ENCODE measurements at regions of chr3 and their contacts with region 1.

Region 1: GRCh38 chr3:187679638-187680396 is 9.6 kb upstream of the SST start:
- DNase-seq: no peak
- H3K4me3 ChIP-seq: no peak overlapping the region
- H3K27ac ChIP-seq: no peak overlapping the region
- H3K4me1 ChIP-seq: peaks cover 0 to 5% (median 0%) of the 10 kb centered on the region in 3 donors
- H3K27me3 ChIP-seq: peaks cover 0 to 50% (median 0%) of the 10 kb centered on the region in 4 donors
- CTCF ChIP-seq: peak; percentile 85 to 93 (median 90)
- POLR2A ChIP-seq: no peak

Region 2: GRCh38 chr3:187223799-187224198 is 456.0 kb before region 1 on chr3:
- intact Hi-C with region 1: loop called (anchors 5 kb)
- DNase-seq: no peak
- H3K4me3 ChIP-seq: no peak overlapping the region
- H3K27ac ChIP-seq: no peak overlapping the region
- H3K4me1 ChIP-seq: no peaks in the 10 kb centered on the region
- H3K27me3 ChIP-seq: peaks cover 0 to 5% (median 0%) of the 10 kb centered on the region in 4 donors
- CTCF ChIP-seq: no peak
- POLR2A ChIP-seq: no peak

Region 3: DNA sequence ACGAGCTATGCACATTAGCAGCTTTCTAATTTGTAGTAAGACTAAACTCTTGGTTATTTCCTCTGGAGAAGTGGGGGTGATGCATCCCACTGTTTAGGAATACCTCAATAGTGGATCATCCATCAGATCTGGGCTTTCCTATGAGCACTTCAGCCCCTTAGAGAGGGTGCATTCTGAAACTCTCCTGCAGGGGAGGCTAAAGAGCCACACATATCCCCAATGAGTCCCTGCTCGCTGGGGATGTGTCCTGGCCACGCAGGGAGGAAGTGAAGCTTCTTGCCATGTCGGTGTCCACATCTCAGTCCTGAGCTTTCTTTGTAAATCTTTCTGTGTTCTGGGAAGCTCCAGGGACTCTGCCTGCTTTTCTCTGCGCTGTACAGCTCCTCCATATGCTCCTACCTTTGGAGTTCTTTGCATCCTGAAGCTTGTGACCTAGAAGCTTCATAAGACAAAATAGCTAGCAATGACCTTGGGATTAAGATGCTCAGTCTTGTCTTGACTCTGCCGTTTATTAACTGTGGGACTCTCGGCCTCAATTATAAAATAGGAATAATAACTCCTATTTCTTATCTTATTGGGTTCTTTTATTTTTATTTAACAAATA is 360.0 kb before region 1 on chr3:
- intact Hi-C with region 1: loop called (anchors 5 kb)
- DNase-seq: no peak
- H3K4me3 ChIP-seq: no peak overlapping the region
- H3K27ac ChIP-seq: no peak overlapping the region
- H3K4me1 ChIP-seq: peaks cover 0 to 13% (median 2%) of the 10 kb centered on the region in 3 donors
- H3K27me3 ChIP-seq: peaks cover 0 to 73% (median 0%) of the 10 kb centered on the region in 4 donors
- CTCF ChIP-seq: peak in 5 of 6 experiments; percentile 70 to 90 (median 85)
- POLR2A ChIP-seq: no peak

Region 4: DNA sequence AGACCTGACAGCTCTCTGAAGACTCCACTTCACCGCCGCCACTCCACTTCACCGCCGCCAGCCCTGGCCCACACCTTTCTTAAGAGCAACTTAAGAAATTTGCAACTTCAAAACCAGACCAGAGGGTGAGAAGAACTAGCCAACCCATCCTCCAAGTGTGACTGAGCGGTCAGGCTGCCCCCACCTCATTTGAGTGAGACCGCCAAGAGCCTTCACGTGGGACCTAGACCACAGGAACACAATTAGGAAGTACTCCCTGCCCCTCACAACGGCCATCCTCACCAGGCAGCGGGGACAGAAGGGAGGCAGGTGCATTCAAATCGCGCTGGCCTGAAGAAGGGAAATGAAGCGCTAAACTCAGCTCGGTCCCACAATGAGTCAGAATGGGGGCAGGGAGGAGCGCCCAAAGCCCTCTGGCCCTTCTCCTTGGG is 222.2 kb after region 1 on chr3:
- intact Hi-C with region 1: no loop called
- DNase-seq: no peak
- H3K4me3 ChIP-seq: no peak overlapping the region
- H3K27ac ChIP-seq: no peak overlapping the region
- H3K4me1 ChIP-seq: no peaks in the 10 kb centered on the region
- H3K27me3 ChIP-seq: no peaks in the 10 kb centered on the region
- CTCF ChIP-seq: no peak
- POLR2A ChIP-seq: no peak

Region 5: DNA sequence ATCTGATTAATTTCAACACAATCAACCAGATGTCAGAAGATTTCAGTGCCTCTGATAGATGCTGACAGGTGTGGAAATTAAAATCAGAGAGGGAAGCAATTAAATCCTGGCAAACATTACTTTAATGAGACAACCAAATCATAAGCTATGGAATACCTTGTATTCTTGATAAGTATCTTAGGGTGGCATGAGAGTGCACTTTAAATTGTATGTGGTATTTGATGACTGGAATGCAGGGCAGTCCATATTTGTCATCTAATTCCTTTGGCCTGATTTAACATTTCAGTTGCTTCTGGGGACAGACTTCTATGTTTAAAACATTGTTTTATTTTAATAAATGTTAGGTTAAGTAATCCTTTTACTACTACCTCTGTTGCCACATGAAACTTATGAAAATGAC is 658.3 kb after region 1 on chr3:
- intact Hi-C with region 1: no loop called
- DNase-seq: no peak
- H3K4me3 ChIP-seq: no peak overlapping the region
- H3K27ac ChIP-seq: no peak overlapping the region
- H3K4me1 ChIP-seq: peaks cover 0 to 32% (median 8%) of the 10 kb centered on the region in 3 donors
- H3K27me3 ChIP-seq: no peaks in the 10 kb centered on the region
- CTCF ChIP-seq: no peak
- POLR2A ChIP-seq: no peak